ENCODE measurements at regions of chr9 and their contacts with region 1.

Region 1: GRCh38 chr9:131237931-131238401 is 38.3 kb downstream of the FAM78A start:
- DNase-seq: peak; percentile 84

Region 2: GRCh38 chr9:130927995-130928900 is 309.7 kb before region 1 on chr9:
- intact Hi-C with region 1: no loop called
- DNase-seq: peak; percentile 81

Region 3: GRCh38 chr9:131129183-131129582 is 108.8 kb before region 1 on chr9:
- intact Hi-C with region 1: no loop called
- DNase-seq: no peak

Region 4: DNA sequence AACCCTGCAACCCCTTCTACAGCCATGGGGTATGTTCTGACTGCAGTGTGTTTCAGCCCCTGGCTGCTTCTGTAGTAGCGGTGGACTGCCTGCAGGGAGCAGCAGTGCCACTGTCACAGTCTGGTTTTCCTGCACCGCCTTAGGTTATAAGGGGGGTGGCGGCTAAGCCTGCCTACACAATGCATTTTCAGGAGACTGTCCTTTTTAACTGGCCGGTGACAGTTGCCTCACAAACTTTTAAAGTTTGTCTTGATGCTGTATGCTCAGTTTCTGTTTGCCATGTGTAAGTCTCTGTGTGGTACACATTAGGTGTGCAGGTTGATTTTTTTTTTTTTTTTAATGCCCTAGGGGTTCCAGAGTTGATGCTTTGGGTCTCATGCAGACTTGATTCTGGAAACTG is 59.6 kb before region 1 on chr9:
- intact Hi-C with region 1: loop called (anchors 5 kb)
- DNase-seq: peak; percentile 87

Region 5: GRCh38 chr9:131203431-131204218 is 34.3 kb before region 1 on chr9:
- intact Hi-C with region 1: no loop called
- DNase-seq: no peak

Region 6: DNA sequence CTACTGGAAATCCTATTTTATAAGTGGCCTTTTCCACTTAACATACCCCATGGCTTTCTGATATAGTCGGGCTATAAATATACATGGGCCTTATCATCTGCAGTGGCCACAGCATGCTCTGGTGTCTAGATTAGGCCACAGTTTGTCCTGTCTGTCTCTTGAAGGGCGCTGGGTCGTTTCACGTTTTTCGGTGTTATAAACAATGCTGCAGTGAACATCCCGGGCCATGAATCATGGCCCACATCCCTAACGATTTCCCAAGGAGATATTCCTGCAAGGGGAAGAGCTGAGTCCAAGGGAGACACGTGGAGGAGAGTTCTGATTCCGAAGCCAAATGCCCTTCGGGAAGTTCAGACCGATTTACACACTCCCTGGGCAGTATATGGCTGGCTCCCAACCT is 59.9 kb after region 1 on chr9:
- intact Hi-C with region 1: loop called (anchors 5 kb)
- DNase-seq: no peak